CD14-positive monocyte (primary cell): ENCODE measurements at regions of chr2 and their contacts with region 1.

Region 1: GRCh38 chr2:72770879-72771461 is 54.9 kb downstream of the EXOC6B start:
- DNase-seq: peak; percentile 43 to 78 (median 65)
- H3K4me3 ChIP-seq: no peak overlapping the region
- H3K4me3 Mint-ChIP-seq: no peak overlapping the region
- H3K27ac ChIP-seq: no peak overlapping the region
- H3K27ac Mint-ChIP-seq: no peak overlapping the region
- H3K4me1 ChIP-seq: no peaks in the 10 kb centered on the region
- H3K4me1 Mint-ChIP-seq: no peaks in the 10 kb centered on the region
- H3K27me3 ChIP-seq: no peaks in the 10 kb centered on the region
- H3K27me3 Mint-ChIP-seq: peaks cover 0 to 3% (median 2%) of the 10 kb centered on the region in 3 donors
- CTCF ChIP-seq: peak; percentile 93

Region 2: GRCh38 chr2:72605836-72606442 is 165.0 kb before region 1 on chr2:
- intact Hi-C with region 1: no loop called
- DNase-seq: no peak
- H3K4me3 ChIP-seq: no peak overlapping the region
- H3K4me3 Mint-ChIP-seq: no peak overlapping the region
- H3K27ac ChIP-seq: no peak overlapping the region
- H3K27ac Mint-ChIP-seq: no peak overlapping the region
- H3K4me1 ChIP-seq: no peaks in the 10 kb centered on the region
- H3K4me1 Mint-ChIP-seq: no peaks in the 10 kb centered on the region
- H3K27me3 ChIP-seq: no peaks in the 10 kb centered on the region
- H3K27me3 Mint-ChIP-seq: peaks cover 2 to 4% (median 3%) of the 10 kb centered on the region in 3 donors
- CTCF ChIP-seq: peak; percentile 68

Region 3: DNA sequence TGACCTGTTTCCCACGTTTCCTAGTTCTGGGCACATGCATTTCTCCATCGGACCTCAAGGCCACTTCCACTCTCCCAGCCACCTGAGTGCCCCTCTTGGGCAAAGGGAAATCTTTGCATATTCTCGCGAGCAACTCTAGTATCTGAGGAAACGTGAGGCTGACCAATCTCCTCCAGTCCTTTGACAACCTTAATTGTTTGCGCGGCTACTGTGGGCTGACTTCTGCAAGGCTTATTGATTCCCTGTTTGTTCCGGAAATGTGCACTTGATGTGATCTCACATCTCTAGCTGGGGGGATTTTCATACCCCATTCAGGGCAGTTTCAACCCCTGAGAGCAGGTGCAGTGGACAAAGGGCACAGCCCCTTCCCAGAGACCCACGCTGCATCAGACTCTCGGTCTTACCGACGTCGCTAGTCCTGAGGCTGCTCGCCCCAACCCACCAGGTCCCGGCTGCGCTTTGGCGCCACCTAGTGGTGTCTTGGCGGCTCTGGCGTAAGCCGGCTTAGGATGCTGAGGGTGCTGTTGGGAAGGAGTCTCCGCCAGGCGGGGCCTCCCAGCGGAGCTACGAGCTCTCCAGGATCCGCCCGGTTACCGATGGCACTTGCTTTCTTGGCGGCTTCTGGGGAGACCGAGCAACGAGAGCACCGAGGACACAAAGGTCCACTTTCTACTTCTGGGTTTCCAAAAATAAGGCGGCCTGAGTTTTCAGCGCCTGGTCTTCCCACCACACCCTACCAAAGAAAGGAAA is 91.4 kb after region 1 on chr2:
- intact Hi-C with region 1: loop called (anchors 2 to 5 kb)
- DNase-seq: peak; percentile 69 to 79 (median 74)
- H3K4me3 ChIP-seq: no peak overlapping the region
- H3K4me3 Mint-ChIP-seq: peak overlapping the region in 1 of 2 donors; percentile 77
- H3K27ac ChIP-seq: no peak overlapping the region
- H3K27ac Mint-ChIP-seq: peak overlapping the region in 1 of 7 donors; percentile 4
- H3K4me1 ChIP-seq: peaks cover 6 to 9% of the 10 kb centered on the region in 2 donors
- H3K4me1 Mint-ChIP-seq: peaks cover 15% of the 10 kb centered on the region
- H3K27me3 ChIP-seq: peaks cover 8 to 31% of the 10 kb centered on the region in 2 donors
- H3K27me3 Mint-ChIP-seq: peaks cover 22 to 37% (median 26%) of the 10 kb centered on the region in 3 donors
- CTCF ChIP-seq: peak; percentile 92